Gastrocnemius medialis (tissue), 4 donors: ENCODE measurements at regions of chr7 and their contacts with region 1.

Region 1: GRCh38 chr7:17325364-17325763 is 26.9 kb downstream of the AHR start:
- DNase-seq: no peak
- ATAC-seq: no peak
- H3K4me3 ChIP-seq: no peak overlapping the region
- H3K27ac ChIP-seq: no peak overlapping the region
- H3K4me1 ChIP-seq: no peaks in the 10 kb centered on the region
- H3K27me3 ChIP-seq: no peaks in the 10 kb centered on the region
- CTCF ChIP-seq: no peak
- POLR2A ChIP-seq: no peak

Region 2: DNA sequence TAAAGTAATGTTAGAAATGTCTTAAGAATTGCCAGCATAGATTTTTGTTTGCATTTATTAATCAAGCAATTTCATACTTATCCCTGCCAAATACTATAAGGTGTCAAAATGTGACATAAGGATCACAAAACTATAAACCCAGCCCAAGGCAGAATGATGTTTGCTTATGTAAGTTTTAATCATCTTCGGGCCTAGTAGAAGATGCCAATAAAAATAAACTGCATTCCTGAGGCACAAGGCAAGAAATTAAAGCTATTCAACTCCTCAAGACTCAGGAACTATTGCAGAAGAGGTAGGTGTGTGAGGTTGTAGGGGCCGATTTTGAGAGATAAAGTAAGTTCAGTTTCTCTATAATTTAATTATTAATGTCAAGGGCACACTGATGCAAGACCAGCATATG is 216.3 kb before region 1 on chr7:
- in situ Hi-C with region 1: no loop called
- intact Hi-C with region 1: no loop called
- DNase-seq: no peak
- ATAC-seq: no peak
- H3K4me3 ChIP-seq: no peak overlapping the region
- H3K27ac ChIP-seq: no peak overlapping the region
- H3K4me1 ChIP-seq: no peaks in the 10 kb centered on the region
- H3K27me3 ChIP-seq: no peaks in the 10 kb centered on the region
- CTCF ChIP-seq: no peak
- POLR2A ChIP-seq: no peak

Region 3: GRCh38 chr7:17289074-17289645 is 36.2 kb before region 1 on chr7:
- in situ Hi-C with region 1: no loop called
- intact Hi-C with region 1: no loop called
- DNase-seq: no peak
- ATAC-seq: no peak
- H3K4me3 ChIP-seq: no peak overlapping the region
- H3K27ac ChIP-seq: no peak overlapping the region
- H3K4me1 ChIP-seq: no peaks in the 10 kb centered on the region
- H3K27me3 ChIP-seq: no peaks in the 10 kb centered on the region
- CTCF ChIP-seq: no peak
- POLR2A ChIP-seq: no peak

Region 4: DNA sequence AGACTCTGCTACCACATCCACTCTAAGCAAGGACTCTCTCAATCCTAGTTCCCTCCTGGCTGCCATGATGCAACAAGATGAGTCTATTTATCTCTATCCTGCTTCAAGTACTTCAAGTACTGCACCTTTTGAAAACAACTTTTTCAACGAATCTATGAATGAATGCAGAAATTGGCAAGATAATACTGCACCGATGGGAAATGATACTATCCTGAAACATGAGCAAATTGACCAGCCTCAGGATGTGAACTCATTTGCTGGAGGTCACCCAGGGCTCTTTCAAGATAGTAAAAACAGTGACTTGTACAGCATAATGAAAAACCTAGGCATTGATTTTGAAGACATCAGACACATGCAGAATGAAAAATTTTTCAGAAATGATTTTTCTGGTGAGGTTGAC is 13.8 kb after region 1 on chr7:
- in situ Hi-C with region 1: no loop called
- intact Hi-C with region 1: loop called (anchors 2 kb)
- DNase-seq: no peak
- ATAC-seq: peak in 1 of 2 donors; percentile 58
- H3K4me3 ChIP-seq: no peak overlapping the region
- H3K27ac ChIP-seq: no peak overlapping the region
- H3K4me1 ChIP-seq: peaks cover 0 to 8% of the 10 kb centered on the region in 2 donors
- H3K27me3 ChIP-seq: no peaks in the 10 kb centered on the region
- CTCF ChIP-seq: no peak
- POLR2A ChIP-seq: no peak